Posterior vena cava (tissue), 2 donors: ENCODE measurements at regions of chr2 and their contacts with region 1.

Region 1: GRCh38 chr2:164910101-164910899 is 45.0 kb downstream of the SLC38A11 start:
- DNase-seq: no peak

Region 2: DNA sequence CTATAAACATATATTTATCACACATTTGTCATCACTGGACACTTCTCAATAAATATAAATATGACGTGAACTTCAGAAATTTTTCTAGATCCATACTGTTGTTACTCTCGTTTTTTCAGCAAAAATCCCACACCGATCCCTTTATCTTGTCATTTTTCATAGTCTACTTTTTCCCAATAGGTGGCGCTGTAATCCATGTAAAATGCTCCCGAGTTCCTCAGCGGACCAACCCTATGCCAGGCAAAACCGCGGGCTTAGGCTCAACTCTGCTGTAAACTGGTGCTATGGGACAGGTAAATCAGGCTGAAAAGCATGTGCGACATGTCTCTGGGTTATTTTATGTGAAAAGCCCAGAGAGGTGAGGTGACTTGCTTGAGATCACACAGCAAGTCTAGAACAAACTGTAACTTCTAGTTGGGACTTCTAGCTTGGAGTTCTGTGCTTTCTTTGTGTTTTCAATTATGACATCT is 172.7 kb before region 1 on chr2:
- intact Hi-C with region 1: loop called in 1 of 2 experiments (anchors 5 kb)
- DNase-seq: peak; percentile 79

Region 3: DNA sequence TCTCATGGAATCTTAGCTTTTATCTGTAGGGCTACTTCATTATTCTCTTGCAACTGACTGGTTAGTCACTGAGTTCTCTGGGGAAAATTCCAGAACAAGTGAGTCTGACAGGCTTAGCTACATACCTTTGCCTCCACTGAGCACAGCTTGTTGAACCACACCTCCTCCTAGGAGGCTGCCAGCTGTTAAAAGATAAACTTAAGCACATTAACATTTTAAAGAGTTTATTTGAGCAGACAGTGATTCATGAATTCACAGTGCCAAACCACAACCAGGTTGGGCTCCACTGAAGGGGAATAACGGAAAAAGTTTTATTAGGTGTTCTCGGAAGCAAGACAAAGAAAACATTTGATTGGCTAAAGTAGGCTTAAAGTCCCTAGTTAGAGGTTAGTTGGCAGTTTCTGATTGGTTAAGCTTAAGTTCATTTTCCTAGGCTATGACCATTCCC is 57.5 kb after region 1 on chr2:
- intact Hi-C with region 1: no loop called
- DNase-seq: no peak